Naive thymus-derived CD4-positive, alpha-beta T cell (primary cell): ENCODE measurements at regions of chr9 and their contacts with region 1.

Region 1: GRCh38 chr9:104747558-104748358 is at the start of gene NIPSNAP3A:
- DNase-seq: peak; percentile 78 to 96 (median 89)
- ATAC-seq: peak; percentile 93
- H3K4me3 ChIP-seq: peak within 1 kb of the TSS; percentile 87
- H3K4me3 Mint-ChIP-seq: peak within 1 kb of the TSS; percentile 88 to 98 (median 96)
- H3K27ac ChIP-seq: peak within 1 kb of the TSS; percentile 93
- H3K27ac Mint-ChIP-seq: peak within 1 kb of the TSS; percentile 92 to 99 (median 97)
- H3K4me1 ChIP-seq: peaks cover 0 to 8% of the 10 kb centered on the region in 2 donors
- H3K4me1 Mint-ChIP-seq: peaks cover 14 to 26% (median 22%) of the 10 kb centered on the region in 7 donors
- H3K27me3 ChIP-seq: no peaks in the 10 kb centered on the region
- H3K27me3 Mint-ChIP-seq: peaks cover 0 to 2% (median 0%) of the 10 kb centered on the region in 5 donors
- total RNA-seq, gene NIPSNAP3A: 7.1 to 17.4 (median 13.4) TPM

Region 2: DNA sequence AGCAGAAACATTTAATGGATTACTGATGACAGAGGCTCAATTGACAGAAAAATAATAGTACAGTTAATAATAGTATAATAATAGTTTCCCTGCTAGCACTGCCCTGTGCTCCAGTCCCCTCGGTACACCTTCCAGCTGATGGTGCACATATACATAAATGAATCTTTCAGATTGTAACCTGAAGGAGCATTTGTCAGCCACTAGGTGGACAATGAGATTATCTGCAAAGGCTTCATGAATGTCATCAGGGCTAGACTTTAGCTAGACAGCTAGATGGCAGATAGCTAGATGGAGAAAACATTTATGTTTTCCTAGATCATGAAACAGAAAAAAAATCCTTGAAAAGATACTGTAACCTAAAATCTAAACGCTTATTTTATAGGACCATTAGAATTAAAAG is 958.1 kb before region 1 on chr9:
- CTCF ChIA-PET with region 1: no interaction called
- POLR2A ChIA-PET with region 1: no interaction called
- intact Hi-C with region 1: loop called in 1 of 2 experiments (anchors 10 kb)
- DNase-seq: peak in 1 of 9 donors; percentile 1
- ATAC-seq: no peak
- H3K4me3 ChIP-seq: no peak overlapping the region
- H3K4me3 Mint-ChIP-seq: no peak overlapping the region
- H3K27ac ChIP-seq: no peak overlapping the region
- H3K27ac Mint-ChIP-seq: no peak overlapping the region
- H3K4me1 ChIP-seq: no peaks in the 10 kb centered on the region
- H3K4me1 Mint-ChIP-seq: peaks cover 0 to 11% (median 0%) of the 10 kb centered on the region in 7 donors
- H3K27me3 ChIP-seq: no peaks in the 10 kb centered on the region
- H3K27me3 Mint-ChIP-seq: no peaks in the 10 kb centered on the region

Region 3: GRCh38 chr9:104608336-104608735 is 139.4 kb before region 1 on chr9:
- CTCF ChIA-PET with region 1: no interaction called
- POLR2A ChIA-PET with region 1: no interaction called
- intact Hi-C with region 1: no loop called
- DNase-seq: no peak
- ATAC-seq: no peak
- H3K4me3 ChIP-seq: no peak overlapping the region
- H3K4me3 Mint-ChIP-seq: no peak overlapping the region
- H3K27ac ChIP-seq: no peak overlapping the region
- H3K27ac Mint-ChIP-seq: no peak overlapping the region
- H3K4me1 ChIP-seq: no peaks in the 10 kb centered on the region
- H3K4me1 Mint-ChIP-seq: no peaks in the 10 kb centered on the region
- H3K27me3 ChIP-seq: no peaks in the 10 kb centered on the region
- H3K27me3 Mint-ChIP-seq: peaks cover 0 to 9% (median 0%) of the 10 kb centered on the region in 5 donors

Region 4: GRCh38 chr9:104765138-104765537 is 17.4 kb after region 1 on chr9:
- CTCF ChIA-PET with region 1: no interaction called
- POLR2A ChIA-PET with region 1: interaction called, 14 read pairs
- intact Hi-C with region 1: loop called (anchors 1 kb)
- DNase-seq: no peak
- ATAC-seq: no peak
- H3K4me3 ChIP-seq: no peak overlapping the region
- H3K4me3 Mint-ChIP-seq: peak overlapping the region; percentile 29 to 99 (median 93)
- H3K27ac ChIP-seq: no peak overlapping the region
- H3K27ac Mint-ChIP-seq: peak overlapping the region in 1 of 9 donors; percentile 26
- H3K4me1 ChIP-seq: no peaks in the 10 kb centered on the region
- H3K4me1 Mint-ChIP-seq: peaks cover 4 to 14% (median 6%) of the 10 kb centered on the region in 7 donors
- H3K27me3 ChIP-seq: no peaks in the 10 kb centered on the region
- H3K27me3 Mint-ChIP-seq: peaks cover 0 to 7% (median 0%) of the 10 kb centered on the region in 5 donors

Region 5: DNA sequence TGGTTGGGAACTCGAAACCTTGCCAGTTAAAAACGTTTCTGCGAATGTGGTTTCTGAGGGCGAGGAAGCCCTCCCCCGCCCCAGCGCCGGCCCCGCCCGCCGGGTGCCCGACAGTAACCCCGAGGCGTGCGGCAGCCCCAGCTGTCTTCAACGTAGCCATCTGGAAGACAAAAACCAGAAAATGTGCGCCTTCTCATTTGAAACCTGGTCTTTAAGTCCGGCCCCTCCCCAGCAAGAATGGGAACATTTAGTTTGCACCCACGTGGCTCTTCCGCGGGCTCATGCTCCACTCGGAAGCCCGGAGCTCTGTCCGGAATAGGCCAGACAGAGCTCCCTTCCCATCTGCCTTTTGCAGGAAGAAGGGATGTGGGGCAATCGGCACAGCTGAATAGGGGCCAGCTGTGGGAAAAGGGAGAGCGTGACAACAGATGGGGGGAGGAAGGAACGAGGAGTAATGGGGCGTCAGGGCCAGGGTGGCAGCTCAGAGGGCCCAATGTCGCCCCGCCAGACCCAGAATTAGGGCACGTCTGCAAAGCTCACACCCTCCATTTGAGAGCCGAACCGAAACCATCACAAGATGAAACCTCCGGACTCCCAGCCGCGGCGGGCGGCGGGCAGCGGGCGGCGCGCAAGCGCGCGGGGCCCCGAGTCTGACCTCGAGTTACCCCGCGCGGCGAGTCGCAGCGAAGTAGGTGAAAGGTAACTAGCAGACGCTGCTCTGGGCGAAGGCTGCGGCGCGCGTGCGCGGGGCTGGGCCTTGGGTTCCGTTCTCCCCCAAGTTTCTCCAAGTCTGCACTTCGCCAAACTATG is 243.6 kb after region 1 on chr9:
- CTCF ChIA-PET with region 1: no interaction called
- POLR2A ChIA-PET with region 1: no interaction called
- intact Hi-C with region 1: loop called in 1 of 2 experiments (anchors 1 kb)
- DNase-seq: peak; percentile 79 to 92 (median 86)
- ATAC-seq: peak; percentile 88
- H3K4me3 ChIP-seq: peak overlapping the region; percentile 80
- H3K4me3 Mint-ChIP-seq: peak overlapping the region; percentile 89 to 94 (median 92)
- H3K27ac ChIP-seq: peak overlapping the region; percentile 92
- H3K27ac Mint-ChIP-seq: peak overlapping the region; percentile 68 to 98 (median 92)
- H3K4me1 ChIP-seq: peaks cover 15 to 32% of the 10 kb centered on the region in 2 donors
- H3K4me1 Mint-ChIP-seq: peaks cover 26 to 45% (median 39%) of the 10 kb centered on the region in 7 donors
- H3K27me3 ChIP-seq: no peaks in the 10 kb centered on the region
- H3K27me3 Mint-ChIP-seq: peaks cover 0 to 63% (median 0%) of the 10 kb centered on the region in 5 donors

Region 6: DNA sequence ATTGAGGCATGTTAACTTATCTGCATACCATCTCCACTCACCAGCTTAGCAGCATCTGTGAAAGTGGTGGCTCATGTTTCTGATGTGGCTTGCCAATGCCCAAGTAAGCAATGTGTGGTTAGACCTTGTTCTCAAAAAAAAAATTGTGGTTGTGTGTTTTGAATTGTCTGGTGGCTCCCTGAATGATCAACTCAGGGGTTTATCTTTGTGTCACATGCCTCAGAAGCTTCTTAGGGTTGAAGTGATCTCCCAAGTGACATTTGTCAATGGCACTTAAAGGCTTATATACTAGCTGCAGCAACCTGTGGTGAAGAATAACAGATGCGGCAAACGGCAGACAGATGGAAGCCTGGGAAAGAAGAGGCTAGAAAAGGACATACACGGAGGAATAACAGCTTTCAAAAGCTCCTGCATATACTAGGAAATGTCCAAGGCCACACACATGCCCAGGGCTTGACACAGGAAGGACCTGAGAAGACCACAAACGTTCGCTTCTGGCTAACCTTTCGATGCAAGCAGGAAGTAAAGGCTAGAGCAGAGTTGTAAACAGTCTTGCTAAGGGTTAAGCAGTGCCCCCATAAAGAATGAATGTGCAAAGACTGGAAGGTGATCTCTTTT is 657.9 kb after region 1 on chr9:
- CTCF ChIA-PET with region 1: no interaction called
- POLR2A ChIA-PET with region 1: interaction called, 3 read pairs
- intact Hi-C with region 1: loop called in 1 of 2 experiments (anchors 5 kb)
- DNase-seq: peak in 8 of 9 donors; percentile 61 to 92 (median 90)
- ATAC-seq: peak; percentile 94
- H3K4me3 ChIP-seq: peak overlapping the region; percentile 1
- H3K4me3 Mint-ChIP-seq: peak overlapping the region in 9 of 10 donors; percentile 63 to 84 (median 75)
- H3K27ac ChIP-seq: no peak overlapping the region
- H3K27ac Mint-ChIP-seq: peak overlapping the region in 8 of 9 donors; percentile 11 to 96 (median 90)
- H3K4me1 ChIP-seq: peaks cover 19 to 22% of the 10 kb centered on the region in 2 donors
- H3K4me1 Mint-ChIP-seq: peaks cover 20 to 42% (median 34%) of the 10 kb centered on the region in 7 donors
- H3K27me3 ChIP-seq: peaks cover 0 to 6% of the 10 kb centered on the region in 2 donors
- H3K27me3 Mint-ChIP-seq: peaks cover 34 to 82% (median 59%) of the 10 kb centered on the region in 5 donors

Region 7: GRCh38 chr9:105557771-105558610 is 810.2 kb after region 1 on chr9 and contains the start of gene FKTN:
- CTCF ChIA-PET with region 1: no interaction called
- POLR2A ChIA-PET with region 1: no interaction called
- intact Hi-C with region 1: loop called (anchors 1 to 5 kb)
- DNase-seq: peak; percentile 58 to 85 (median 83)
- ATAC-seq: peak; percentile 98
- H3K4me3 ChIP-seq: peak within 1 kb of the TSS; percentile 95
- H3K4me3 Mint-ChIP-seq: peak within 1 kb of the TSS; percentile 90 to 96 (median 94)
- H3K27ac ChIP-seq: peak within 1 kb of the TSS; percentile 61
- H3K27ac Mint-ChIP-seq: peak within 1 kb of the TSS; percentile 66 to 92 (median 86)
- H3K4me1 ChIP-seq: peaks cover 0 to 6% of the 10 kb centered on the region in 2 donors
- H3K4me1 Mint-ChIP-seq: peaks cover 11 to 37% (median 20%) of the 10 kb centered on the region in 7 donors
- H3K27me3 ChIP-seq: no peaks in the 10 kb centered on the region
- H3K27me3 Mint-ChIP-seq: no peaks in the 10 kb centered on the region
- total RNA-seq, gene FKTN: 8.0 to 15.5 (median 10.8) TPM